HCT116 (cell line): ENCODE measurements at regions of chr14 and their contacts with region 1.

Region 1: GRCh38 chr14:96424109-96424989 is 32.4 kb downstream of the AK7 start:
- DNase-seq: peak; percentile 57
- ATAC-seq: peak; percentile 89
- H3K4me3 ChIP-seq: no peak overlapping the region
- H3K27ac ChIP-seq: no peak overlapping the region
- H3K4me1 ChIP-seq: no peaks in the 10 kb centered on the region
- H3K27me3 ChIP-seq: no peaks in the 10 kb centered on the region
- CTCF ChIP-seq: peak; percentile 46 to 88 (median 86); a peak in 5 of 6 replicates
- POLR2A ChIP-seq: no peak
- RAD21 ChIP-seq: peak; percentile 91

Region 2: DNA sequence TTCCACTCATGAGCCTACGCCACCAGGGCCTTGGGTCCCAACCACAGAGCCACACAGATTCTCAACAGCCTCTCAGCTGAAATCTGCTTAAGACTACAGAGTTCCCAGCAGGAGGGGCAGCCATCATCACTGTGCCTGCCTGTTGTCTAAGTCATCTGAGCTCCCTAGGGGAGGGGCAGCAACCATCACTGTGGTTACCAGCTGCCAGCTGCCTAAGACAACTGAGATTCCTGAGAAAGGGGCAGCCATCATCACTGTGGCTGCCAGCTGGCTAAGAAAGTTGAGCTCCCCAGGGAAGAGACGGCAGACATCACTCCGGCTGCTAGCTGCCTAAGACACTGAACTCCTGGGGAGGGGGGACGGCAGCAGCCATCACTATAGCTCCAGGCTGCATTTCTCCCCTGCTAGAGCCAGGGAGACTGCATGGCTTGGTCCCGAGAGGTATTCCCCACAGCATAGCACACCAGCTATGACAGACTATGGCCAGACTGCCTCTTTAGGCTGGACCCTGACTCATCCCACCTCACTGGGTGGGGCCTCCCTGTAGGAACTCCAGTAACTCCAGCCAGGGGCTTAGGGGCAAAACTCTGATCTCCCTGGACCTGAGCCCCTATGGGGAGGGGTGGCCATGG is 422.4 kb before region 1 on chr14:
- CTCF ChIA-PET with region 1: no interaction called
- POLR2A ChIA-PET with region 1: no interaction called
- RAD21 ChIA-PET with region 1: no interaction called
- intact Hi-C with region 1: loop called (anchors 10 kb)
- DNase-seq: no peak
- ATAC-seq: no peak
- H3K4me3 ChIP-seq: no peak overlapping the region
- H3K27ac ChIP-seq: no peak overlapping the region
- H3K4me1 ChIP-seq: no peaks in the 10 kb centered on the region
- H3K27me3 ChIP-seq: peaks cover 54% of the 10 kb centered on the region
- CTCF ChIP-seq: no peak
- POLR2A ChIP-seq: no peak
- RAD21 ChIP-seq: no peak

Region 3: DNA sequence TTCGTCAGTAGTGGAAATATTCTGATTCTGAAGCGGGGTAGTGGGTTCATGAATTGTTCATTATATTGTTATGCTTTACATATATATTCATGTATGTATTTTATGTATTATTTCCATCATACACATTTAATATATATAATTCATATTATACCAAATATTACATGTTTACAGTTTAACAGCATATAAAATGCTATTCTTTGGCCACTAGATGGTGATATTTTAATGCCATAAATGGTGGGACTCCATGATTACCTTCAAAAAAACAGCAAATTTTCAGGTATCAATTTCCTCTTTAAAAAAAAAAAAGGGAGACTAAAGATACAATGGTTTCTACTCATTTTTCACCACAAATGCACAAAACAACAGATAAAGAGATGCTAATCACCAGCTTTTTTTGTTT is 127.3 kb before region 1 on chr14:
- CTCF ChIA-PET with region 1: interaction called, 3 read pairs
- POLR2A ChIA-PET with region 1: no interaction called
- RAD21 ChIA-PET with region 1: no interaction called
- intact Hi-C with region 1: loop called (anchors 1 kb)
- DNase-seq: no peak
- ATAC-seq: no peak
- H3K4me3 ChIP-seq: no peak overlapping the region
- H3K27ac ChIP-seq: no peak overlapping the region
- H3K4me1 ChIP-seq: no peaks in the 10 kb centered on the region
- H3K27me3 ChIP-seq: no peaks in the 10 kb centered on the region
- CTCF ChIP-seq: peak; percentile 33 to 65 (median 43); a peak in 4 of 6 replicates
- POLR2A ChIP-seq: no peak
- RAD21 ChIP-seq: peak; percentile 68